ENCODE measurements at regions of chr1 and their contacts with region 1.

Region 1: DNA sequence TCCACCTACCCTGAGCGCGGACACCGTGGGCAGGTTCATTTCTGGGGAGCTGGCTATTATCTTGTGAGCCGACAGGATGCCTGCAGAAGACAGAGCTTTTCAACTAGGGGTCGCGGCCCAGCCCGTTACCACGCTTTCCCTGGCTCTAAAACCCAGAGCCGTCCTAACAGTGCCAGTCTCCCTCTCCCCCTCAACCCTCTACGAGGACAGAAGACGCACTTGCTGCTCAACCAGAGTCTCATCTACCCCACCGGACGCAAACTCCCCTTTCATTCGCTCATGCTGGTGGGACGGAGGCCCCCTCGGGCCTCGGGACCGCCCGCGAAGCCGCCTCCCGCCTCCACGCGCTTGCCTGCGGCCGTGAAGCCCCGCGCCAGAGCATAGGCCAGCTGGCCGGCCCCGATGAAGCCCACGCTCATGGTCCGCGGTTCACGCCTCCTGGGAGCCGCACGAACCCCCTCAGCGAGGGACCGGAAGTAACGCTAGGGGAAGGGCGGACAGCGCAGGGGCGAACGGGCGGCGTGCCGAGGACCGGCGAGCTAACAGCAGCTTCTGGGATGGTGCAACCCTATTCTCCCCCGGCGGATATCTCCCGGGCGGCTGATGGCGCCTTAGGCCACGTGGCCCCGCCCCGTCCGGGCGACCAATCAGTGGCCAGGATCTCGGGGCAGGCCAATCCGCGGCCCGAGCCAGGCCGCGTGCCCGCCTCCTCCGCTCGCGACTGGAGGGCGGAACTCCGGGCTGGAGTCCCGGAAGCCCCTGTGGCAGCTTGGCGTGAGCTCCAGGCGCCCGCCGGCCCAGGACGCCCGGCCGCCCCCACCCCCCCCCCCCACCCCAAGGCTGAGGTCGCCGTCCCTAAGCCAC is at the start of gene PYCR2:
- DNase-seq: peak; percentile 91
- H3K4me3 ChIP-seq: peak within 1 kb of the TSS; percentile 89
- H3K27ac ChIP-seq: peak within 1 kb of the TSS; percentile 81
- H3K27me3 ChIP-seq: no peaks in the 10 kb centered on the region
- CTCF ChIP-seq: no peak; the same call in 1 of the 2 replicates
- polyA plus RNA-seq, gene PYCR2: 29.4 and 37.5 TPM in 2 replicates

Region 2: GRCh38 chr1:225485991-225486530 is 437.9 kb before region 1 on chr1:
- CTCF ChIA-PET with region 1: no interaction called
- POLR2A ChIA-PET with region 1: interaction called, 11 read pairs
- DNase-seq: no peak
- H3K4me3 ChIP-seq: no peak overlapping the region
- H3K27ac ChIP-seq: no peak overlapping the region
- H3K27me3 ChIP-seq: no peaks in the 10 kb centered on the region
- CTCF ChIP-seq: no peak